AG04450 (cell line): ENCODE measurements at regions of chr1 and their contacts with region 1.

Region 1: DNA sequence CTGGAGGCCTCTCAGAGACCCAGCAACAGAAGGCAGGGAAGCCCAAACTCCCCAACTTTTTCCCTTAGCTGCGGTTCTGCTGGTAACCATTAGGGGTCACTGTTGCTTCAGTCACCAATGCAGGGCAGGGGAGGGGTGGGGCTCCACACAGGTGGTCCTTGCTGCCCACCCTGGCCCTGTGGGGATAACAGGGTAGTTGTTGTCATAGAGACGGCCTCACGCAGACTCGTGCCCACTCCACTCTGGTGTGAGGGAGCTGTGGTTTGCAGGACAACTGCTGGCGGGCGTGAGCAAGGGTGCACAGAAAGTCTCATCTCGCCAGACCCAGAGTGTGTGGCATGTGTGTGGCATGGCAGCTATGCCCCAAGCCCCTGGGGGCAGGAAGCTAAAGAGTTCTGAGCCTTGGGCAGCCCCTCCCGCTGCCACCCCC is 19.9 kb downstream of the INSRR start:
- DNase-seq: no peak
- H3K4me3 ChIP-seq: no peak overlapping the region
- H3K27ac ChIP-seq: no peak overlapping the region
- H3K27me3 ChIP-seq: peaks cover 76% of the 10 kb centered on the region
- CTCF ChIP-seq: peak; percentile 92

Region 2: DNA sequence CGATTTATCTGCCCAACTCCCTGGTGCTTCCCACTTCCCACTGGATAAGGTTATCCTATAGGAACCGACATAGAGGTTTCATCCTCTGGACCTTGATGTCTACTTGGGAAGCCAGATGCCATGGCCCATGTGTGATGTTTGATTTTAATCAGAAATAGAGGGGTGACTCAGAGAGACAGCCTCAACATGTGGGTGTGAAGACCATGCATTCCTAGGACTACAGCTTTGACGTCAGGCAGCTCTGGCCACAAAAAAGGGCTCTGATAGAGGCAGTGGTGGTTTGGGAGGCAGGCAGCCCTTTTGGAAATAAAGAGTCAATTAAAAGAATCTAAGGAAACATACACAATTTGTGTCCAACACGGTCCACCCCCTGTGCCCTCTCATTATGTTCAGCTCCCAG is 17.2 kb before region 1 on chr1:
- CTCF ChIA-PET with region 1: interaction called, 40 read pairs
- POLR2A ChIA-PET with region 1: no interaction called
- DNase-seq: no peak
- H3K4me3 ChIP-seq: no peak overlapping the region
- H3K27ac ChIP-seq: no peak overlapping the region
- H3K27me3 ChIP-seq: peaks cover 24% of the 10 kb centered on the region
- CTCF ChIP-seq: no peak

Region 3: DNA sequence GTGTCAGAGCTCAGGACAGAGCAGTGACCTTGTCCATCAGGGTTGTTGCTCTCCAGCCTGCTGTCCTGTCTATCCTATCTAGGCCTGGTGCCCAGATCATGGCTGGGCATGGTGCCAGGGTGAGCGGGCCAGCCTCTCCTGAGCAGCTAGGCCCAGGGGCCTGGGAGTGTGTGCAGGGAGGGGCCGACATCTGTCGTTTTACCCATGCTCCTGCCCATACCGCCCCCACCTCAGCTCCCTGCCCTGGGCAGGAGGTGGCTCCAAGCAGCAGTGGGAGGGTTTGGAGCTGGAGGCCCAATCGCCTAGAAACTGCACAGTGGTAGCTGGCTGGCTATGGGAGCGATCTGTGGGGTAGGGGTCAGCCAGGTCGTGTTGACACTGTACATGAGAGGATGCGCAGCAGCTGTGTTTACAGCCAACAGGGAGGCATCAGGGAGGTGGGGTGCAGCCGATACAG is 13.4 kb after region 1 on chr1:
- CTCF ChIA-PET with region 1: interaction called, 27 read pairs
- POLR2A ChIA-PET with region 1: no interaction called
- DNase-seq: peak; percentile 15
- H3K4me3 ChIP-seq: no peak overlapping the region
- H3K27ac ChIP-seq: no peak overlapping the region
- H3K27me3 ChIP-seq: peaks cover 67% of the 10 kb centered on the region
- CTCF ChIP-seq: no peak

Region 4: DNA sequence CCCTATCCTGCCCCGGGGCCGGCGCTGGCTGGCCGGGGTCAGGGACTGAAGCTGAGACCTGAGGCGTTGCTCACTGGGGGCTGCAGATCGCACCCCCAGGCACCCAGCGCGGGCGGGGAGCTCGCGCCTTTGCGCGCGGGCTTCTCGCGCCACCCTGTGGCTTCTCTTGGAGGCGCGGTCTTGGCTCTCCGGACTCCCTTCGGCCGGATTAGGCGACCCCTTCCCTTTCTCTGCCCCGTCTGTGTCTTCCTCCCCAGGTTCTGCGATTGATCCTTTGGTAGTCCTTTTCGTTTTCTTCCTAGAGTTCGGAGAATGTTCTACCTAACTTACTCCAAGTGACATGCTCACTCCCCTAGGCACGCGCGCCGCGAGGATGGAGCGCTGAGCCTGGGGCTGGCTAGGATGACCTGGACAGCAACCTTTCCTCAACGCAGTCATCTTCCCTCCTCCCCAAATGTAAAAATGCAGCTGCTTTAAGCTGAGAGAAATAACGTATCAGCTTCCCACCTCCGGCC is 21.2 kb after region 1 on chr1:
- CTCF ChIA-PET with region 1: interaction called, 64 read pairs
- POLR2A ChIA-PET with region 1: interaction called, 4 read pairs
- DNase-seq: no peak
- H3K4me3 ChIP-seq: peak overlapping the region; percentile 32
- H3K27ac ChIP-seq: no peak overlapping the region
- H3K27me3 ChIP-seq: peaks cover 81% of the 10 kb centered on the region
- CTCF ChIP-seq: peak; percentile 78

Region 5: DNA sequence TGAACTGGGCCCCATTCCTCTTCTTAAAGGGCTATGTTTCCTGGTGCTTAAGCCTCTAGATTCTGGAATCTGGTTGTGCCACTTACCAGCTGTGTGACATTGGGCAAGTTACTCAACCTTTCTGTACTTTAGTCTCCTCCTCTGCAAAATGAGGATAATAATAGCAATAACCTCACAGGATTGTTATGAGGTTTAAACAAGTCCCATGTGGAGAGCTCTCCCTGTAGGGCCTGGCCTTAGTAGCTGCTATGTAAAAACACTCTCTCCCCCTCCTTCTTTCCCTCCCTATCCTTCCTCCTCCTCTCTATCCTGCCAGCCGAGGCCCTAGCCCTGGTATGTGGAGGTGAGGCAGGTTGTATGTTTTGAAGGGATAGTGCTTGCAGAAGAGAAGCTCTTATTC is 46.3 kb after region 1 on chr1:
- CTCF ChIA-PET with region 1: interaction called, 74 read pairs
- POLR2A ChIA-PET with region 1: interaction called, 5 read pairs
- DNase-seq: no peak
- H3K4me3 ChIP-seq: no peak overlapping the region
- H3K27ac ChIP-seq: no peak overlapping the region
- H3K27me3 ChIP-seq: peaks cover 65% of the 10 kb centered on the region
- CTCF ChIP-seq: no peak